ENCODE measurements at regions of chr12 and their contacts with region 1.

Region 1: GRCh38 chr12:47307680-47308399 is 228.1 kb upstream of the AMIGO2 start:
- DNase-seq: peak; percentile 41 to 78
- H3K4me3 ChIP-seq: no peak overlapping the region
- H3K27ac ChIP-seq: no peak overlapping the region
- H3K4me1 ChIP-seq: peaks cover 0 to 4% (median 0%) of the 10 kb centered on the region in 4 donors
- H3K27me3 ChIP-seq: no peaks in the 10 kb centered on the region
- CTCF ChIP-seq: peak in 5 of 7 experiments; percentile 23 to 68 (median 56)
- EP300 ChIP-seq: no peak
- POLR2A ChIP-seq: no peak

Region 2: GRCh38 chr12:47032644-47033043 is 275.2 kb before region 1 on chr12:
- intact Hi-C with region 1: loop called (anchors 10 kb)
- DNase-seq: peak in 1 of 2 donors; percentile 84
- H3K4me3 ChIP-seq: no peak overlapping the region
- H3K27ac ChIP-seq: no peak overlapping the region
- H3K4me1 ChIP-seq: peaks cover 0 to 14% (median 7%) of the 10 kb centered on the region in 4 donors
- H3K27me3 ChIP-seq: no peaks in the 10 kb centered on the region
- CTCF ChIP-seq: peak in 5 of 7 experiments; percentile 19 to 51 (median 40)
- EP300 ChIP-seq: no peak
- POLR2A ChIP-seq: no peak

Region 3: DNA sequence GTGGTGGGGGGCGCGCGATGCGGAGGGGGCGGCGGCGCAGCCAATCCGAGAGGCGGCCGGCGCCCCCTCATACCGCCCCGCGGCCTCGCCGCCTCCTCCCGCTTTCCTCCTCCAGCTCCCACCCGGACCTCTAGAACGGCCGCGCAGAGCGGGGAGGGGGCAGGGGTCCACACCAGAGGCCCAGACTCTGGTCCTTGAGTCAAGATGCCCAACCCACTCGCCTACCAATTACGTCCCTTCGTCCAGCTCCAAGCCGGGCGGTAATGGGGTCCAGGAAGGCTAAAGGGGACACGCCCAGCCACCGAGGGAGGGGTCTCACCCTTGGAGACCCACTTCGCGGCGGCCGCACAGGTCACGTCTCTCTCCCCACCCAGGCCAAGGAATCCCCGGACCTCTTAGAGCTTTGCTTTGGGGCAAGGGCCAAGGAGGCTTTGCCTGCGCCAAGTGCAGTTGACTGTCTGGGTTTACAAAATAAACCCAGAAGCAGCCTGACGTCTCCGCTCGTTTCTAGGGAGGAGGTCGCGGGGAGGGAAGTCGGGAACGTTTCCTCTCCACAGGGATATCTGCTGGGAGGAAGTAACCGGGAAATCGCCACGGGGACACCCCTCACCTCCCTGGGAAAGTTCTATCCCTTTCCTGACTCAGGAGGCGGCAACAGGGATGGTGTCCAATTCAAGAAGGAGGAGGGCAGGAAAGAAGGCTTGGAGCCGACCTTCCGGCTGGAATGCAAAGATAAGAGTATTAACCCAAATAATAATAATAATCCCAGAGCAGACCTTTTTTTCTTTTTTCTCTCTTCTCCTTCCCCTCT is 227.7 kb before region 1 on chr12:
- intact Hi-C with region 1: loop called (anchors 5 kb)
- DNase-seq: peak; percentile 36 to 79
- H3K4me3 ChIP-seq: peak overlapping the region; percentile 72 to 92 (median 80)
- H3K27ac ChIP-seq: peak overlapping the region; percentile 84 to 92 (median 89)
- H3K4me1 ChIP-seq: peaks cover 8 to 67% (median 36%) of the 10 kb centered on the region in 4 donors
- H3K27me3 ChIP-seq: peaks cover 0 to 16% (median 0%) of the 10 kb centered on the region in 3 donors
- CTCF ChIP-seq: no peak
- EP300 ChIP-seq: no peak
- POLR2A ChIP-seq: no peak